Right ventricle myocardium inferior (tissue), 1 donor: ENCODE measurements at regions of chr19 and their contacts with region 1.

Region 1: GRCh38 chr19:2663920-2664571 is 38.4 kb downstream of the GNG7 start:
- DNase-seq: peak; percentile 83
- ATAC-seq: peak; percentile 91

Region 2: DNA sequence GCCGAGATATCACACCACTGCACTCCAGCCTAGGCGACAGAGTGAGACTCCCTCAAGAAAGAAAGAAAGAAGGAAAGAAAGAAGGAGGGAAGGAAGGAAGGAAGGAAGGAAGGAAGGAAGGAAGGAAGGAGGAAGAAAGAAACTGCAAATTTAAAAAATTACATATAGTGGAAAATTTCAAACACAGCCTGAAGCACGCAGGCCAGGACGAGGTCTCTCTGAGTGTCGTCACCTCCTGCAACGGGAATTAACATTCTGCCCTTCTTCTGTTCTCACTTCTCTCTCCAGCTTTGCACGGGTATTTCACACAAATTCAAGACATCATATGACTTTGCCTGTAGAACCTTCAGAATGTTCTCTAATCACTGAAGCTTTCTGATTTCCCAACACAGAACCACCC is 69.7 kb before region 1 on chr19:
- intact Hi-C with region 1: no loop called
- DNase-seq: peak; percentile 5
- ATAC-seq: no peak

Region 3: DNA sequence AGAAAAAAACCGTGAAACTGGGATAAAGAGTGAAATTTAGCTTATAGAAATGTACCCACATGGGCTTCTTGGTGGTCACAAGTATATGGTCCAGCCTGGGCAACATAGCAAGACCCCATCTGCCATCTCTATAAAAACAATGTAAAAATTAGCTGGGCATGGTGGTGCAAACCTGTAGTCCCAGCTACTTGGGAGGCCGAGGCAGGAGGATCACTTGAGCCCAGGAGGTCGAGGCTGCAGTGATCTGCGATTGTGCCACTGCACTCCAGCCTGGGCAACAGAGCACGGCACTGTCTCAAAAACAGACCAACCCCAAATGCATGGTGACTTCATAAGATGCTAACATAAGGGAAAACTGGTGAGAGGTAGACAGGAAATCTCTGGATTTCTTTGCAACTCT is 15.9 kb before region 1 on chr19:
- intact Hi-C with region 1: no loop called
- DNase-seq: no peak
- ATAC-seq: no peak

Region 4: GRCh38 chr19:2719910-2720776 is 56.1 kb after region 1 on chr19:
- intact Hi-C with region 1: loop called (anchors 2 kb)
- DNase-seq: no peak
- ATAC-seq: peak; percentile 61

Region 5: GRCh38 chr19:2739602-2740313 is 75.7 kb after region 1 on chr19 and contains the start of gene SLC39A3:
- intact Hi-C with region 1: loop called (anchors 1 kb)
- DNase-seq: peak; percentile 96
- ATAC-seq: peak; percentile 100
- total RNA-seq, gene SLC39A3: 24.5 TPM